ENCODE measurements at regions of chr4 and their contacts with region 1.

Region 1: DNA sequence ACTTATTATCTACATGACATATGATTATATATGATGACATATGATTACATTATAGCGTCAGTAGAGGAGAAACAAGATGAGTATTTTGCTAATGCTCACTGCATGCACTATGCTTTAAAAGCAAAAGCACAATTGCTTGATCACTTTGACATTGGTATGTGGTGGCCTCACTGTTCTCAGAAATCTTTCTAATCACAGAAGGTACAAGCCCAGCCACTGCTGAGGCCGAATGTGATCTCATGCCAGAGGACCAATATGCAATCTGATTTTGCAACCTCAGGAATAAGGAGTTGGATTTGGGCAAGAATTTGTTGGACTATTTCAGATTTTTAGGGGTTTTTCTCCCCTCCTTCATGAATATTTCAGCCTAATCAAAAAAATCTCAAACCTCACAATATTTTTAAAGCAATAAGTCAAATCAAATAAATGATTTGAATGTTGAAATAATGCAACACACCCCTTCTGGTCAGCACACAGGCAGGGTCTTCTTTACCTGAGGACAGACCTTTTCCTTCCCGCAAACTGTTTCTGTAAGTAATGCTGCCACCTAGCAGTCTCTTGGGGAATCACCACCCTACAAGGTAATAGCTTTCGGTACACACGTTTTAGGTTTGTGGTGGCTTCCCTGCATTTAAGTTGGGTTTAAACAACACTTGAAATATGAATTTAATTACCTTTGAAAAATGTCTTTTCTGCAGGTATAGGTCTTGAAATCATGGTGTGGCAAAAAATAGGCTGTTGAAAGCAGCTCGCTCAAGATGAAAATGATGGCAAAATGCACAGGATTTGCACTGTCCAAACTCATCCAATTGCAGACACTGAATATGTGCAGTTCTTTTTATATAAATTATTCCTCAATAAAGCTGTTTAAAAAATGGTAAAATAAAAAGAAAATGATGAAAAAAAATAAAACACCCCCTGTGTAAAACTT is 4.8 kb upstream of the CXCL13 start:
- DNase-seq: peak; percentile 29
- H3K4me3 ChIP-seq: no peak overlapping the region
- H3K27ac ChIP-seq: no peak overlapping the region
- H3K4me1 ChIP-seq: no peaks in the 10 kb centered on the region
- H3K27me3 ChIP-seq: peaks cover 5 to 19% of the 10 kb centered on the region in 2 experiments
- CTCF ChIP-seq: peak; percentile 63 to 76
- POLR2A ChIP-seq: no peak

Region 2: DNA sequence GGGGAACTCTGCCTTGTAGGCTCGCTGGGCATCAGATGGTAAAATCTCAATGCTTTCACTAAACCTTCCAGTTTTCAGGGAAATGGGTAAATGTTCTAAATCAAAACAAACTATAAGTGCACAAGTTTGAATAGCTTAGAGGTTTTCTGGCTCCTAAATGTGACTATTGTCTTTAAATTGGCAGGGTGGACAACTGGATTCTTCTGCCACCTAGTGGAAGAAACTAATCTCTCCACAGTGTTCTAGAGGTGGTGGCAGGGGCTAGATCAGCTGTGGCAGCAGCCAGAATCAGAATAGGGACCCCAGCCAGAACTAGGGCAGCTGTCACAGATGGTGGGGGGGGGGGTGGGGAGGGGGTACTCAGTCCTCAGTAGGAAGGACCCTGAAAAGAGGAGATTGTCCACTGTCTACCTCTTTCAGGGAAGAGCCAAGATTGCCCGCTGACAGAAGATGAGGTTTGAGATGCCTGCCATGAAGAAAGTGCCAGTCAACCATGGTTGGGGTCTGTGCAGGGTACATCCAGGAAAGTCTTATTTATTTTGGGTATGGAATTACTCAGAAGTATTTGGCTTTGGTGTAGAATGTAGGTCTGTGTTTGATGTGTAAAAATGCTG is 242.4 kb before region 1 on chr4:
- CTCF ChIA-PET with region 1: interaction called, 11 read pairs
- POLR2A ChIA-PET with region 1: no interaction called
- dilution Hi-C with region 1: no loop called
- intact Hi-C with region 1: no loop called
- DNase-seq: peak; percentile 41
- H3K4me3 ChIP-seq: no peak overlapping the region
- H3K27ac ChIP-seq: no peak overlapping the region
- H3K4me1 ChIP-seq: no peaks in the 10 kb centered on the region
- H3K27me3 ChIP-seq: peaks cover 5 to 6% of the 10 kb centered on the region in 2 experiments
- CTCF ChIP-seq: peak; percentile 54 to 68
- POLR2A ChIP-seq: no peak

Region 3: DNA sequence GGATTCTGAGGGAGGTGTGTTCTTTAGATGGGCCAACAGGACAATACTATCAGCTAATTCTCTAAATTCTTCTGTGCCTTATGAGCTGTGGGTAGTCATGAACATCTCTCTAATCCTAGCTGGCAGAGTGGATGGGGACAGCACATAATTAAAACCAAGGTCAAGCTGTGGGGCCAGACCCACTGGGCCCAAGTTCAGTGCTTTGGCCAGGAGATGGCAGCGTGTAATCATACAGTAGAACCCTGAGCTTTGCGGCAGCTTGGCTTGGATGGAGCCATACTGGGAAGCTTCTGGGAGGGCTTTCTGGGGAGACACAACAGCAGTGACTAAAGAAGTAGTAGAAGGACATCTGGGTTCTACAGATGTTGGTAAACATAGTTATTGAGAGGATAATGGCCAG is 135.5 kb before region 1 on chr4:
- CTCF ChIA-PET with region 1: interaction called, 31 read pairs
- POLR2A ChIA-PET with region 1: no interaction called
- dilution Hi-C with region 1: no loop called
- intact Hi-C with region 1: no loop called
- DNase-seq: no peak
- H3K4me3 ChIP-seq: no peak overlapping the region
- H3K27ac ChIP-seq: no peak overlapping the region
- H3K4me1 ChIP-seq: no peaks in the 10 kb centered on the region
- H3K27me3 ChIP-seq: no peaks in the 10 kb centered on the region
- CTCF ChIP-seq: peak in 1 of 2 donors; percentile 21
- POLR2A ChIP-seq: no peak

Region 4: DNA sequence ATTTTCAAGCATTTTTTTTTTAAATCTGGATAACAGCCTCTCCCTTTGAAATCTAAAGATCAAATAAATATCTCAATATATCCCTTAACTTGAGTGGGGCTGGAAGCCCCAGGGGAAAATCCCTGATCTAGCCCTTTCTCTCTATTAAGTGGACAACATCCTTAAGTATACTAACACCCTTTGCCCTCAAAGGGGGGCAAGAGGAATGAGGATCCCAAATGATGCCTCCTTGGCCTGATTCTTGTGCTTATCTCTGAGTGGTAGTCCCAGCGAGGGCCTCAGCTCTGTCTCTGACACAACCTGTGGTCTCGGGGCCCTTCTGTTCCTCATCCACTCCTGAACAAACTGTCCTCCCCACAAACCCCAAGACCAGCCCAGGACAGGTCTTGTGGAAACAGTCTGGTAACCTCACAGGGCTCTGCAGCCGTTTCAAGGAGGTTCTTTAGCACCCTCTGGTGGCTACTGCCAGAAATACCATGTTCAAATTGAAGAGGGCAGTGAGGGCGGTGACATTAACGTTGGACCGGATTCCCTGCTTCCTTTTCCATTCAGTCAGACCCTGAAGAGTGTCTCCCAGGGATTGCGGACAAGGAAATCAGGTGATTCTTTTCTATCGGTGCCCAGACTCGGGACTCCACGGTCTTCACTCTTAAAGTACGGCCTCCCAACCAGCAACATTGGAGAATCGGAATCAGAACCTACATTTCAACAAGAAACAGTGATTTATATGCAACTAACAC is 17.8 kb after region 1 on chr4:
- CTCF ChIA-PET with region 1: interaction called, 25 read pairs
- POLR2A ChIA-PET with region 1: no interaction called
- dilution Hi-C with region 1: no loop called
- intact Hi-C with region 1: no loop called
- DNase-seq: peak; percentile 75
- H3K4me3 ChIP-seq: no peak overlapping the region
- H3K27ac ChIP-seq: no peak overlapping the region
- H3K4me1 ChIP-seq: no peaks in the 10 kb centered on the region
- H3K27me3 ChIP-seq: peaks cover 2 to 8% of the 10 kb centered on the region in 2 experiments
- CTCF ChIP-seq: peak; percentile 84 to 90
- POLR2A ChIP-seq: no peak

Region 5: GRCh38 chr4:77742054-77742453 is 141.3 kb after region 1 on chr4:
- CTCF ChIA-PET with region 1: no interaction called
- POLR2A ChIA-PET with region 1: no interaction called
- dilution Hi-C with region 1: no loop called
- intact Hi-C with region 1: no loop called
- DNase-seq: no peak
- H3K4me3 ChIP-seq: no peak overlapping the region
- H3K27ac ChIP-seq: no peak overlapping the region
- H3K4me1 ChIP-seq: no peaks in the 10 kb centered on the region
- H3K27me3 ChIP-seq: no peaks in the 10 kb centered on the region
- CTCF ChIP-seq: no peak
- POLR2A ChIP-seq: no peak

Measured in endothelial cell of umbilical vein (primary cell).